ENCODE measurements at regions of chr5 and their contacts with region 1.

Region 1: DNA sequence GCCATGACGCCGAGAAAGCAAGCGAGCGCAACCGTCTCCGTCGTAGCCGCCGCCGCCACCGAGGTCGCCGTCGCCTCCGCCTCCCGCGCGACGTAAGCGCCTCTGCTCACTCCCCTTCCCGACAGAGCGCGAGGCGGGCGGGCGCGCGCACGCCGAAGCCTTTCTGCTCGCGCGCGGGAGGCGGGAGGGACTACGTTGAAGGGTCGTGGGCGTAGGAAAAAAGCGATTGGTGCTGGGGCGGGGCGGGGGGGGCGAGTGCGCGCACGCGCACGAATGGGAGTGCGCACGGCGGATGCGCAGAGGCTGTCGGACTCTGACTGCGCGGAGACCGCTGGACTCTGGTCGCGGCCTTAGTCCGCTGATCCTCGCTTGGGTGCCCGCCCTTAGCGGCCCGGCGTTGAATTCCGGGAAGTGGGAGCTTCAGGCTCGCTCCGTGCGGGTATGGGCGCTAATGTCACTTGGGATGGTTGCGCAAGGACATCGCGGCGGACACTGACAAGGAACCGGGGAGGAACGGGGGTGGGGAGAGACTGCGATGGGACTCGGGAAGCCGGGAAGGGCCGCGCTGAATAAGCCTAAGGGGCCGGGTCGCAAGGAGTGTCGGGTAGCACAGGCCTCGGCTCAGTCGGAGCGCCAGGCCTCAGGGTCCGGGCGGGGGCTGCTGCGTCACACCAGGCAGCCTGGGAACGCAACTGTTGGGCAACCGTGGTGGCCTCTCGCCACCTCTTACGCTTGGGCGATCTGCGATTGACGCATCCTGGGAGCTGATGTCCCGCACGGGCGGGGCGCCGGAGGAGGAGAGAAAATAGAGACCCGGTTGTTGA is at the start of gene CHD1:
- DNase-seq: peak; percentile 97 to 100
- H3K4me3 ChIP-seq: peak within 1 kb of the TSS; percentile 93
- CTCF ChIP-seq: no peak
- POLR2A ChIP-seq: peak in 1 of 2 donors; percentile 87
- total RNA-seq, gene CHD1: 40.8 to 46.8 (median 43.2) TPM

Region 2: GRCh38 chr5:98474782-98475181 is 454.3 kb before region 1 on chr5:
- intact Hi-C with region 1: no loop called
- DNase-seq: no peak
- H3K4me3 ChIP-seq: no peak overlapping the region
- CTCF ChIP-seq: no peak
- POLR2A ChIP-seq: no peak

Region 3: GRCh38 chr5:98750693-98751092 is 178.4 kb before region 1 on chr5:
- intact Hi-C with region 1: no loop called
- DNase-seq: no peak
- H3K4me3 ChIP-seq: no peak overlapping the region
- CTCF ChIP-seq: no peak
- POLR2A ChIP-seq: no peak

Region 4: DNA sequence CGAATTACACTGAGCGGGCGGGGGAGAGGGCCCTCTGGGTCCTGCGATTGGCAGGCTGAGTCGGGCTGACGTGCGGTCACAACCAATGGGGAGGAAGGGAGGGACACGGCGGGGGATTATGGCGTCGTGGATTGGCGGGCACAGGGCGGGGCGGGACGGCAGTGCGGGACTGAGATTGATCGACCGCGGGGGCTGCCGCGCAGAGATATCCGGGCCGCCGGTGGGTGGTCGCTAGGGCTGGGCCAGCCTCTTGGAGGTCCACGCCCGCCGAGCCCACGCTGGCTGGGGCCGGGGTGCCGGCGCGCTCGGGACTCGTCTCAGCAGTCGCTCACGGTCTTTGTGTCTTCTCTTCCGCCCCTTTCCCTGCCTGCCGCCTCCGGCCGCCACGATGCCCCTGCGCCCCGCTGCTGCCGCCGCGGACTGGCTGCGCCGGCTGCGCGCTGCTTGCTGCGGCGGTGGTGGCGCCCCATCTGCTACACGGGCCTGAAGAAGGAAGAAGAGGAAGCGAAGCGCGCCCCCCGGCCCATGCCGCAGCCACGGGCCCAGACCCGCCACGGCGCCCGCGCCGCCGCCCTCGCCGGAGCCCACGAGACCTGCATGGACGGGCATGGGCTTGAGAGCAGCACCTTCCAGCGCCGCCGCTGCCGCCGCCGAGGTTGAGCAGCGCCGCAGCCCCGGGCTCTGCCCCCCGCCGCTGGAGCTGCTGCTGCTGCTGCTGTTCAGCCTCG is 155.5 kb before region 1 on chr5 and contains the start of gene RGMB:
- intact Hi-C with region 1: loop called (anchors 5 kb)
- DNase-seq: peak; percentile 99 to 100
- H3K4me3 ChIP-seq: peak within 1 kb of the TSS; percentile 81
- CTCF ChIP-seq: peak in 1 of 3 donors; percentile 17
- POLR2A ChIP-seq: no peak
- total RNA-seq, gene RGMB: 58.5 to 75.3 (median 69.6) TPM